ENCODE measurements at regions of chr6 and their contacts with region 1.

Region 1: GRCh38 chr6:51339719-51340118 is 521.0 kb downstream of the TFAP2B start:
- H3K4me3 Mint-ChIP-seq: no peak overlapping the region
- H3K27ac Mint-ChIP-seq: no peak overlapping the region
- H3K4me1 Mint-ChIP-seq: no peaks in the 10 kb centered on the region
- H3K27me3 Mint-ChIP-seq: no peaks in the 10 kb centered on the region

Region 2: DNA sequence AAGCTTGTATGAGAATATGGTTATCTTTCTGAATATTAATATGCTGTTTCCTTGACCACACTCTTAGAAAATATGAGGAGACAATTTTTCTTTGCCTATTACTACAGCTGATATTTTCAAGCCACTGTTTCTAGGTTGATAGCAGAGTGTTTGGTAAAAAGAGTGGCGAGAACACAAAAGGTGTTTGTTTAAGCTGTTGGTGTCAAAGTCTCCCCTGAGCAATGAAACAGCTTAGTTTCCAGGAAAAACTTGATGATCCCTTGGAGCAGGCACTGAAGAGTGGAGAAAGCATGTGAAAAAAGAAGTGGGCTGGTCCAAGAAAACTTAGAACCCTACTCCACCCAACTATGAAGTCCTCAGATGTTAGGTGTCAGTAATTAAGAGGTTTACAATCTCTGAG is 338.3 kb before region 1 on chr6:
- intact Hi-C with region 1: no loop called
- H3K4me3 Mint-ChIP-seq: no peak overlapping the region
- H3K27ac Mint-ChIP-seq: no peak overlapping the region
- H3K4me1 Mint-ChIP-seq: no peaks in the 10 kb centered on the region
- H3K27me3 Mint-ChIP-seq: no peaks in the 10 kb centered on the region

Region 3: DNA sequence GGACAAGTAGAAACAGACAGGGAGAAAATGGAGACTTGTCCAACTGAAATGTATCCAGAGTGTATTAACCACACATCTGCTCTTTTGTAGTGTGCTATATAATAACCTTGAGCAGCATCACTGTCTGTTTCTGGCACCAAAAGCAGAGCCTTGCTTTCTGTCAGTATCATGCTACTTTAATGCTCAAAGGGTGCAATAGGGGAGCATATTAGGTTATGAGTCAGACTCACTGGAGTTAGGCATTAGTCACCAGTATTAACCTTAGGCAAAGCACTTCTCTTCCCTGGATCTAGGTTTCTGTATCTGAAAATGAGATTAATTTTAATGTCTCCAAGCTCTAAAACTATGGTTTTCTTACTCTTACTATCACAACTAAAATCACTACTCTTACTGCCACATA is 240.9 kb before region 1 on chr6:
- intact Hi-C with region 1: loop called (anchors 10 kb)
- H3K4me3 Mint-ChIP-seq: no peak overlapping the region
- H3K27ac Mint-ChIP-seq: no peak overlapping the region
- H3K4me1 Mint-ChIP-seq: no peaks in the 10 kb centered on the region
- H3K27me3 Mint-ChIP-seq: no peaks in the 10 kb centered on the region

Region 4: GRCh38 chr6:51415501-51415900 is 75.8 kb after region 1 on chr6:
- intact Hi-C with region 1: no loop called
- H3K4me3 Mint-ChIP-seq: no peak overlapping the region
- H3K27ac Mint-ChIP-seq: no peak overlapping the region
- H3K4me1 Mint-ChIP-seq: no peaks in the 10 kb centered on the region
- H3K27me3 Mint-ChIP-seq: no peaks in the 10 kb centered on the region

Measured in dendritic cell treated with granulocyte-macrophage colony-stimulating factor and Interleukin-4, amounts not matched to agents 40 ng/mL and 50 ng/mL, for 4 days (primary cell).